CD4-positive, alpha-beta memory T cell (primary cell): ENCODE measurements at regions of chr1 and their contacts with region 1.

Region 1: DNA sequence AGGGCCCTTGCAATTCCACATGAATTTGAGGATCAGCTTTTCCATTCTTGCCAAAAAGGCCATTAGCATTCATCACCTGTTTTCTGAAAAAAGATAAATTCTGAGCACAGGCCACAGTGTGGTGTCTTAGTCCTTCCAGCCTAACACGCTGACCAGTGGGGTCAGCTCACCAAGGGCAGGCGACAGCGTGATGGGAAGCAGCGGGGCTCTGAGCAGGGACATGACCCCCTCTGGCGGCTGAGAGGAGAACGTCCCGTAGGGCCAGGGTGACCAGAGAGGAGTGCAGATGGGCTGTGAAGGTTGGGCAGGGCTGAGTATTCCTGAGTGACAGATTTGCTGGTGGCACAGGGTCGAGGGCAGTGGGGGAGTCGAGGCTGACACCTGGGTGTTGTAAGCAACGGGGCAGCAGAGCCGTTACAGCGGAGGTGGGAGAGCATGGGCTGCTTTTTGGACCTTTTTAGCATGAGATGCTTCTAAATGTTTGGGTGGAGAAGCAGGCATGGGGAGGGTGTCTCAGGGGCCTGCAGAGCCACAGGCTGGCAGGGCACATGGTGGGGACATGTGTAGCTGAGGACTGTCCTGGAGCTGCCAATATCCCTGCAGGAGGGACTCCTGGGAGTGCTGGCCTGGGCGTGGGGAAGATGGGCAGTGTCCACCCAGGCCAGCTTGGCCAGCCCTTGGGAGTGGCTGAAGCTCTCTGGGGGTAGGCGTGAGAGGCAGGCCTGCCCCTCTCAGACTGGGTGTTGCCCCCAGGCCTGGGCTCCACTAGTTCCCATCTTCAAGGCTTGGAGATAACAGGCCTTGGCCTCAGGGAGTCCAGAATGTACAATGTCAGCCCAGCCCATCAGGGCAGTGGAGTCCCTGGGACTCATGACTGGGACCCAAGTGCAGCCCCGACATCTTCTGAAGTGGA is 8.6 kb upstream of the CALML6 start:
- DNase-seq: peak in 4 of 5 donors; percentile 54 to 67 (median 58)
- H3K4me3 ChIP-seq: no peak overlapping the region
- H3K4me3 Mint-ChIP-seq: peak overlapping the region in 6 of 8 donors; percentile 56 to 75 (median 62)
- H3K27ac ChIP-seq: no peak overlapping the region
- H3K27ac Mint-ChIP-seq: peak overlapping the region; percentile 36 to 86 (median 72)
- H3K4me1 ChIP-seq: peaks cover 21% of the 10 kb centered on the region
- H3K4me1 Mint-ChIP-seq: peaks cover 7 to 16% (median 11%) of the 10 kb centered on the region in 4 donors
- H3K27me3 ChIP-seq: no peaks in the 10 kb centered on the region
- H3K27me3 Mint-ChIP-seq: no peaks in the 10 kb centered on the region

Region 2: DNA sequence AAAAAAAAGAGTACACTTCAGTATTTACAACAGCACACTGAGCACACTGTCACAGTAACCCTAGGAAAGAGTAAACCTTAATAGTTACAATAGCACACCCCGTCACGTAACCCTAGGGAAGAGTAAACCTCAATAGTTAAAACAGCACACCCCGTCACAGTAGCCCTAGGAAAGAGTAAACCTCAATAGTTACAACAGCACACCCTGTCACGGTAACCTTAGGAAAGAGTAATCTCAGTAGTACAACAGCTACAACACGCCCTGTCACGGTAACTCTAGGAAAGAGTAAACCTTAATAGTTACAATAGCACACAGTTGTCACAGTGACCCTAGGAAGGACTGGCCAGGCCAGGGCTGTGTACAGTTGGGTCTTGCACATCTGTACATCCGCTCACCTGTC is 185.2 kb before region 1 on chr1:
- CTCF ChIA-PET with region 1: interaction called, 3 read pairs
- POLR2A ChIA-PET with region 1: interaction called, 9 read pairs
- intact Hi-C with region 1: loop called (anchors 5 kb)
- DNase-seq: no peak
- H3K4me3 ChIP-seq: no peak overlapping the region
- H3K4me3 Mint-ChIP-seq: peak overlapping the region in 2 of 8 donors; percentile 3 to 17
- H3K27ac ChIP-seq: no peak overlapping the region
- H3K27ac Mint-ChIP-seq: peak overlapping the region in 3 of 7 donors; percentile 26 to 62 (median 59)
- H3K4me1 ChIP-seq: peaks cover 5% of the 10 kb centered on the region
- H3K4me1 Mint-ChIP-seq: peaks cover 4 to 15% (median 10%) of the 10 kb centered on the region in 4 donors
- H3K27me3 ChIP-seq: no peaks in the 10 kb centered on the region
- H3K27me3 Mint-ChIP-seq: no peaks in the 10 kb centered on the region

Region 3: DNA sequence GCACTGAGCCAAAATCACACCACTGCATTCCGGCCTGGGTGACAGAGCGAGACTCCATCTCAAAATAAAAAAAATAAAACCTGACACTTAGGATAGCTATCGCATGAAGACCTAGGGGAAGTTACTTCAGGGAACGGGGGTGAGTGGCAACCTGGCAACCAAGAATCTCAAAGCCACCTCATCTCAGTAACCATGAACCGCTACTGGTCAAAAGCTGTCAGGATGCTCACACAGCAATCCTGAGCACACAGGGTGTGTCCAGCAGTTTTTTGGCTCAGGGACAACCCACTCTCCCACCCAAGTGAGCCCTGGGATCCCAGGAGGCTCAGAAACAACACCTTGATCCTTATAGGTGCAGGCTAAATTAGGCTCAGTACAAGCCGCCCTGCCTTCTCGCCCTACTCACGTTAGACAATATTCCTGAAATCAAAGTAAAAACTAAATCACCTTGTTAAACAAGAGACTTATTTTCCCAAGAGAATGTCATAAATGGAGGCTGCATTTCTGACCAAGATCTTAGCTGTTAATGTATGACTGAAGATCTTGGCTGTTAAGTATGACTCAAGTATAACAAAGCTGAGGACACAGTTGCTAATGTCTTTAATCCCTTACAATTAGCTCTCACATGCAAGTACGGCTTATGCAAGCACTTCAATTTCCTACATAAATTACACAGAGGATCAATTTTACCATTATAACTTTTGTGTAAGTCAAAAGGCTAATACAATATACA is 79.9 kb before region 1 on chr1:
- CTCF ChIA-PET with region 1: interaction called, 13 read pairs
- POLR2A ChIA-PET with region 1: interaction called, 3 read pairs
- intact Hi-C with region 1: no loop called
- DNase-seq: no peak
- H3K4me3 ChIP-seq: no peak overlapping the region
- H3K4me3 Mint-ChIP-seq: no peak overlapping the region
- H3K27ac ChIP-seq: no peak overlapping the region
- H3K27ac Mint-ChIP-seq: peak overlapping the region; percentile 8 to 80 (median 52)
- H3K4me1 ChIP-seq: peaks cover 18% of the 10 kb centered on the region
- H3K4me1 Mint-ChIP-seq: peaks cover 21 to 38% (median 34%) of the 10 kb centered on the region in 4 donors
- H3K27me3 ChIP-seq: no peaks in the 10 kb centered on the region
- H3K27me3 Mint-ChIP-seq: no peaks in the 10 kb centered on the region

Region 4: GRCh38 chr1:1890506-1891348 is 15.7 kb before region 1 on chr1 and contains the start of gene GNB1:
- CTCF ChIA-PET with region 1: interaction called, 58 read pairs
- POLR2A ChIA-PET with region 1: interaction called, 28 read pairs
- intact Hi-C with region 1: loop called (anchors 1 kb)
- DNase-seq: peak; percentile 82 to 95 (median 93)
- H3K4me3 ChIP-seq: peak within 1 kb of the TSS; percentile 74 to 76
- H3K4me3 Mint-ChIP-seq: peak within 1 kb of the TSS; percentile 81 to 95 (median 91)
- H3K27ac ChIP-seq: peak within 1 kb of the TSS; percentile 91
- H3K27ac Mint-ChIP-seq: peak within 1 kb of the TSS; percentile 93 to 99 (median 97)
- H3K4me1 ChIP-seq: peaks cover 66% of the 10 kb centered on the region
- H3K4me1 Mint-ChIP-seq: peaks cover 29 to 72% (median 51%) of the 10 kb centered on the region in 4 donors
- H3K27me3 ChIP-seq: no peaks in the 10 kb centered on the region
- H3K27me3 Mint-ChIP-seq: peaks cover 0 to 4% of the 10 kb centered on the region in 2 donors
- total RNA-seq, gene GNB1: 257 to 276 TPM

Region 5: DNA sequence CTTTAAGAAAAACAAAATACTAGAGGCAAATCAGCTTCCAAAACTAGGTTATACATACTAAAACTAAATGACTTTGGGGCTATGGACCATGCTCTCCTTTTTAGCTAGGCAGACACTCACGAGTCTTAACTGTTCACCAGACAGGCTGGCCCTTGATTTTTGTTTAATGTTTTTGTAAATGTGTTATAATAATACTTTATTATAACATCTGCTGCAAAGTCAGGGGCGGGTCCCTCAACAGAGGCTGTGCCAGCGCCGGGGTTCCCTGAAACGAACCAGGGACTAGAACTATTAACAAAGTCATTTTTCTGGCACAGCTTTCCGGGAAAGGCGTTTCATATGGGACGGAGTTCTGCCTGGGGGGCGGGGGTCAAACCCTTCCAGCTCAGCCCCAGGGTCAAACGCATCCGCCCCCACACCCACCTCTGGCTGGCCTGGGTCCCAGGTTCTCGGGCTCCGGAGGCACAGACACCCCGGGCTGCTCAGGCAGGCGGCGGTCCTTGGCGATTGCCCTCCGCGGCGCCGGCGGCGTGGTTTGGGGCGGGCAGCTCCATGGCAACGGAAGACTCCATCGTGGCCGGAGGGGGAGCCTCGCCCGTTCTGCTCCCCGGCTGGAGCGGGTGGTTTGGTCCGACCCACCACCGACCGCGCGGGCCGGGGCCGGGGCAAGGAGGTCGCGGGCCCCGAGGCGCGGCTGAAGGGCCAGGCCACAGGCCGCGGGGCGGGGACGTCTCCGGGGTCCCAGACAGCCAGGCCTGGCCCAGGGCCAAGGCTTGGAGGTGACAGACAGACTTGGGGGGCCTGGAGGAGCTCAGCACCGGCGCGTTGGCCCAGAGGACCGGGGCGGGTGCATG is 97.1 kb after region 1 on chr1 and contains the start of gene CFAP74:
- CTCF ChIA-PET with region 1: no interaction called
- POLR2A ChIA-PET with region 1: no interaction called
- intact Hi-C with region 1: no loop called
- DNase-seq: no peak
- H3K4me3 ChIP-seq: no peak within 1 kb of the TSS
- H3K4me3 Mint-ChIP-seq: peak within 1 kb of the TSS in 1 of 8 donors; percentile 31
- H3K27ac ChIP-seq: no peak within 1 kb of the TSS
- H3K27ac Mint-ChIP-seq: no peak within 1 kb of the TSS
- H3K4me1 ChIP-seq: no peaks in the 10 kb centered on the region
- H3K4me1 Mint-ChIP-seq: no peaks in the 10 kb centered on the region
- H3K27me3 ChIP-seq: peaks cover 4% of the 10 kb centered on the region
- H3K27me3 Mint-ChIP-seq: peaks cover 31 to 40% of the 10 kb centered on the region in 2 donors
- total RNA-seq, gene CFAP74: not detected